Activated CD4-positive, alpha-beta T cell treated with anti-CD3 and anti-CD28 coated beads for 36 hours (primary cell): ENCODE measurements at regions of chr6 and their contacts with region 1.

Region 1: GRCh38 chr6:32244946-32245398 is 21.1 kb upstream of the NOTCH4 start:
- DNase-seq: peak; percentile 81
- ATAC-seq: peak; percentile 68
- H3K4me3 Mint-ChIP-seq: peak overlapping the region; percentile 6
- H3K27ac Mint-ChIP-seq: no peak overlapping the region
- H3K4me1 Mint-ChIP-seq: peaks cover 27% of the 10 kb centered on the region
- H3K27me3 Mint-ChIP-seq: no peaks in the 10 kb centered on the region

Region 2: DNA sequence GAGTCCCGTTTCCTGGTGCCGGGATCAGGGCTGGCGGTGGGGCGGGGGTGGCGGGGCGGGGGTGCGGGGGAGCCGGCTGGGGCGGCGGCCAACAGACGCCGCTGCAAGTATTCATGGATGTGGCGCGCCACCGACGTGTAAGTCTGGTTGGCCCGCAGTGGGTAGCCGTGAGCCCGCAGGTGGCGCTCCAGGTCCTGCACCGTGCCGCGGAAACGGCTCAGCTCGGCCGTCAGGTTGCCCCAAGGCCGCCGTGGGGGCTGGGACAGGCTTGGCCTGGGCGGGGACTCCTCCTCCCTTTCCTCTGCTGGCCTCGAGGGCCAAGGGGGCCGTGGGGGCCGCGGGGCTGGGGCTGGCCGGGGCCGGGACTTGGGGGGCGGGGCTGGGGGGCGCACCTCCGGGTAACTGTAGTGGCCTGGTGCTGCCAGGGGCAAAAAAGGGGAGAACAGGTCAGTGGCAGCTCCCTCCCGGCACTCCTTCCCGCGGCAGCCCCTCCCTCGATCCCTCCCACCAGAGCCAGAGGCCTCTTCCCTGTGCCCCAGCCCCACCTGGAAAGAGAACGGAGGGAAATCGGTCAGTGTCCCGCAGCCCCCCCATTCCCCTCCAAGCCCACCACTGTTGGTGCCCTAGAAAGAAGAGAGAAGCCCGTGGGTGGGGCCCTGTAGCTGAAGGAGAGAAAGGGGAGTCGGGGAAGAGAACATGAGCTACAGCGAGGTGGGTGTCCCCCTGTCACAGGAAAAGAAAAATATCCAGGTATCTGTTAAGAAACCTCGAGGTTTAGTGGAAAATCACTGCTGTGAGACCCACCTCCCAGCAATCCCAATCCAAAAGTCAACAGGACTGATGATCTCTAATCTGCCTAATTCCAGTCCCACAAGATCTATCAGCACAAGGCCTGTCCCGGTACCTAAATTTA is 157.1 kb before region 1 on chr6:
- CTCF ChIA-PET with region 1: interaction called, 4 read pairs
- POLR2A ChIA-PET with region 1: no interaction called
- intact Hi-C with region 1: loop called in 1 of 2 experiments (anchors 5 kb)
- DNase-seq: peak; percentile 89
- ATAC-seq: peak; percentile 93
- H3K4me3 Mint-ChIP-seq: no peak overlapping the region
- H3K27ac Mint-ChIP-seq: no peak overlapping the region
- H3K4me1 Mint-ChIP-seq: peaks cover 9% of the 10 kb centered on the region
- H3K27me3 Mint-ChIP-seq: peaks cover 27% of the 10 kb centered on the region

Region 3: DNA sequence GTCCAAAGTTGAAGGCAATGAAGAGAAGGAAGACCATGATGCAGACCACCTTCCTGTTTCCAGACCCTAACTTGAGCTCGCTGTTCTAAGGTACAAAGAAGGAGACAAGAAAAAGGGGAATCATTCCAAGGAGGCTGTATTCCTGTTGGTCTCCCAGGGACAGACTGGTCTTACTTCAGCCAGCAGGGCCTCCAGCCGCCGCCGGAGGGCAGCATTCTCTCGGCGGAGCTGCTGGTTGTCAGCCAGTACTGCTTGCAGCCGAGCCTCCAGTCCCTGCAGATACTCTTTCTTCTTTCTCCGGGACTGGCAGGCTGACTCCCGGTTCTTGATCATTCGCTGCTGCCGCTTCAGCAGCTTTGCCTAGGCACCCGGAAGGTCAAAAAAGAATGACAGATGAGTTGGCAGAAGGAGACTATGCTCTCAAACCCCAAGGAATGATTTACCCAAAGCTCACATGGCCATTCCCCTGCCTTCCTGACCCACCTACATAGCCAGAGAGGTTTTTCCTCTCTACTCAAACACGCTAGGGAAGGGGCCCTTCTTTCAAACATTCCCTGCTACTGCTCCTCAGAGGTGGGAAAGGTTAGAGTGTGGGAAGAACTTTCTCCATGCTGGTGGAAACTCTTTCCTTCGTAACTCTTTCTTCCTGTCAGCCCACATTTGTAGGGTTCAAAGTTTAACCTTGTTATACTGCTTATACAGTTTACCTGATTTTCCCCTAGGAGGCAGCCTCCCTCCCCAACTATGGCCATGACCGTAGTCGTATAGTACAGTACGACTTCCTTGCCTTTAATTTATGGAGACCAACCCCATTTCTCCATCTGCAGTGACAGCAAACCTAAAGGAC is 126.0 kb before region 1 on chr6:
- CTCF ChIA-PET with region 1: interaction called, 3 read pairs
- POLR2A ChIA-PET with region 1: interaction called, 5 read pairs
- intact Hi-C with region 1: loop called in 1 of 2 experiments (anchors 5 kb)
- DNase-seq: peak; percentile 86
- ATAC-seq: peak; percentile 88
- H3K4me3 Mint-ChIP-seq: no peak overlapping the region
- H3K27ac Mint-ChIP-seq: no peak overlapping the region
- H3K4me1 Mint-ChIP-seq: peaks cover 14% of the 10 kb centered on the region
- H3K27me3 Mint-ChIP-seq: no peaks in the 10 kb centered on the region

Region 4: DNA sequence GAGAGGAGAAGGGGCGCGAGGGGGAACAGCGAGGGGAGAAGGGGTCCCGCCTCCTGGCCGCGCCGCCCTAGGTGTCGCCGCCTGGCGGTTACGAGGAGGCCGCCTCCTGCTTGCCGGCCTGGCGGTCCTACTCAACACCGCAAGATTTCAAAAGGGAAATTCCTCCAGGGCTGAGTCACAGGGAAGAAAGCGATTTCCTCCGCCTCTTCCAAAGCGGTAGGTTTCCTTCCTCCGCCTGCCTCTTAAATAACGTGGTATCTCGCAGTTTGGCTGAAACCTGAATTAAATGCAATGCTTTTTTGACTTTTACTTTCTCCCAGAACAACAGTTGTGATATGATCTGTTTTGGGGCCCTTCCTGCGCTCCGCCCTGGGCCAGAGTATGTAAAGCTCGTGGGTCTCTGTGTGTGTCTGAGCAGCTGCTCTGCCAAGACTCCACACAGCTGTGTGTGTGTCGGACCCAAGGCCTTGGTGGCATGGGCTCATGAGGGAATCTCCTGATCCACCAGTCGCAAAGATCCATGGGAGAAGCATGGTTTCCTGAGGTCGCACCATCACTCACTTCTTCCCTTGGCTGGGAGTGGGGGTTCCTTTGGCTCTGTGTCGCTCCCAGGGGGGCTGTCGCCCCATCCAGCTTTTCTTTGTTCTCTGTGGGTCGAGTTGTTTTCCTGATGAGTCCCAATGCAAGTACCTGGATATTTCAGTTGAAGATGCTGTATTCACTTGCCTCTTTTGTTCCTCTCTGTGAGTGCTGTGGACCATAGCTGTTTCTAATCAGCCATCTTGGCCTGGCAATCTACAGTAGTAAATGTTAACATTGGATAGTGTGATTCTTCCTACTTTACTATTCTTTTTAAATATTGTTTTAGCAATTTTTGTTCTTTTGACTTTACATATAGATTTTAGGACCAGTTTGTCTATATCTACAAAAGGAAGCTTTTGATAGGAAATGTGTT is 10.5 kb after region 1 on chr6:
- CTCF ChIA-PET with region 1: interaction called, 24 read pairs
- POLR2A ChIA-PET with region 1: no interaction called
- intact Hi-C with region 1: loop called in 1 of 2 experiments (anchors 2 kb)
- DNase-seq: peak; percentile 84
- ATAC-seq: peak; percentile 90
- H3K4me3 Mint-ChIP-seq: peak overlapping the region; percentile 43
- H3K27ac Mint-ChIP-seq: peak overlapping the region; percentile 76
- H3K4me1 Mint-ChIP-seq: peaks cover 33% of the 10 kb centered on the region
- H3K27me3 Mint-ChIP-seq: peaks cover 8% of the 10 kb centered on the region

Region 5: GRCh38 chr6:32692019-32692418 is 447.0 kb after region 1 on chr6:
- CTCF ChIA-PET with region 1: no interaction called
- POLR2A ChIA-PET with region 1: no interaction called
- intact Hi-C with region 1: loop called (anchors 5 to 10 kb)
- DNase-seq: peak; percentile 80
- ATAC-seq: peak; percentile 82
- H3K4me3 Mint-ChIP-seq: no peak overlapping the region
- H3K27ac Mint-ChIP-seq: no peak overlapping the region
- H3K4me1 Mint-ChIP-seq: peaks cover 8% of the 10 kb centered on the region
- H3K27me3 Mint-ChIP-seq: peaks cover 16% of the 10 kb centered on the region